WTC11 (cell line): ENCODE measurements at regions of chr20 and their contacts with region 1.

Region 1: DNA sequence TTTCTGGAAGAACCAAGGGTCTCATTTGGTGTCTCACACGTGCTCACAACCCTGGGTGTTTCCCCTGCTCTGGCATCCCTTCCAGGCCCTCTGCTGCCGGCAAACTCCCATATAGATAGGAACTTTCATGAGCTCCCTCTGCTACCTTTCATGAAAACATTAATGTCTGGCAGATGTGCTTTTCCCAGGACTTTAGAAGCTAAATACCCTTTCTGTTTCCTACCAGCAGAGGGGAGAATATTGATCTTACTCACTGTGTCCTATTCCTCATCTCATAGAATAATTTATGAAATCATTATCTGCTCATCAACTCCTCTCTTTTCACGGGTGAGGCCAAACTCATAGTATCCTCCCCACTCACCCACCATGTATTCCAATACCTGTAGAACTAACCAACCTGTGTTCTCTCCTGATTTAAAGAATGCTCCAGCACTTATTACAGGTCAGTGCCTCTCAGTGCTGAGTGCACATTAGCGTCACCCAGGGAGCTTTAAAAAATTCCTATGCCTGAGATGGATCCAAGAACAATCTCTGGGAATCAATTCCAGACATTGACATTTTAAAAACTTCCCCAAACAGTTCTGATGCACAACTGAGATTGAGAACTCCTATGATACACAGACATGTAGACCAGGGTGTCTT is 298.5 kb upstream of the JAG1 start:
- DNase-seq: no peak
- ATAC-seq: no peak
- H3K4me3 Mint-ChIP-seq: no peak overlapping the region
- H3K27ac Mint-ChIP-seq: no peak overlapping the region
- H3K4me1 Mint-ChIP-seq: peaks cover 4% of the 10 kb centered on the region
- H3K27me3 Mint-ChIP-seq: no peaks in the 10 kb centered on the region
- CTCF ChIP-seq: no peak

Region 2: DNA sequence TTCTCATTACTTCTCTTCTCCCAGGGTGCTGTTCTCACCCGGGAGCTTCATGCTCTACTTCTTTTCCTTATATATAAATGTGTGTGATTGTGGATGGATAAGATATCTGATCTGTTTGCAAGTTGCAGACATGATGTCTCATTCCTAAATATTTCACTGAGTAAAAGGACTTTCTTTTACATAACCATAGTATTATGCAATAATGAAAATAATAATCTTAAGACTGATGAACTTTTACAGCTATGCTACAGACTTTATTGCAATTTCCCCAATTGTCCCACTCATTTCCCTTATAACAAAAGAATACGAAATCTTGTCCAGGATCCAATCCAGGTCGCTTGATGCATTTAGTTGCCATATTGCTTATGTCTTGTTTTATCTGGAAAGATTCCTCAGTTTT is 14.1 kb before region 1 on chr20:
- CTCF ChIA-PET with region 1: interaction called, 14 read pairs
- POLR2A ChIA-PET with region 1: no interaction called
- DNase-seq: no peak
- ATAC-seq: no peak
- H3K4me3 Mint-ChIP-seq: no peak overlapping the region
- H3K27ac Mint-ChIP-seq: no peak overlapping the region
- H3K4me1 Mint-ChIP-seq: peaks cover 6% of the 10 kb centered on the region
- H3K27me3 Mint-ChIP-seq: no peaks in the 10 kb centered on the region
- CTCF ChIP-seq: no peak

Region 3: DNA sequence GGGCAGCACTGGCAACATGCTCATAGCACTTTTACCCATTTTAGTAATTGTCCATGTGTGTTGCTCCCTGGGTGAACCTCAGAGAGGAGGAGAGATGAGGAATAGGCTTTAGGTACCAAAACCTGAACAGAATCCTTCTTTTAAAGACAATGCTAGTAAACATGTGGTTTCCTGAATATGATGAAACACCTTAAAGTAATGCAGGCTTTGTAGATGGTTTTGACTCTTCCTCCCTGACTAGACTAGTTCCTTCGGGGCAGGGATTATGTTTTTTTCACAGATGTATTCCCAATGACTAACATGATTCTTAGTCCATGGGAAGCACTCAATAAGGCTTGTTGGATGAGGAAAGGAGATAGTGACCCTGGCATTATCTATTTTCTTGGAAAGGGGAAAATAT is 69.1 kb after region 1 on chr20:
- CTCF ChIA-PET with region 1: no interaction called
- POLR2A ChIA-PET with region 1: no interaction called
- DNase-seq: no peak
- ATAC-seq: no peak
- H3K4me3 Mint-ChIP-seq: no peak overlapping the region
- H3K27ac Mint-ChIP-seq: no peak overlapping the region
- H3K4me1 Mint-ChIP-seq: no peaks in the 10 kb centered on the region
- H3K27me3 Mint-ChIP-seq: no peaks in the 10 kb centered on the region
- CTCF ChIP-seq: no peak